Activated CD4-positive, alpha-beta memory T cell treated with anti-CD3 and anti-CD28 coated beads, Interleukin-2, amount 10 ng/mL, durations not matched to agents 7 days and 5 days (primary cell): ENCODE measurements at regions of chr14 and their contacts with region 1.

Region 1: GRCh38 chr14:68795597-68796417 is 2.9 kb upstream of the ZFP36L1 start:
- DNase-seq: peak; percentile 84
- H3K4me3 Mint-ChIP-seq: peak overlapping the region; percentile 92
- H3K27ac Mint-ChIP-seq: peak overlapping the region; percentile 100
- H3K4me1 Mint-ChIP-seq: peaks cover 34% of the 10 kb centered on the region
- H3K27me3 Mint-ChIP-seq: no peaks in the 10 kb centered on the region

Region 2: GRCh38 chr14:68248481-68249255 is 547.1 kb before region 1 on chr14:
- CTCF ChIA-PET with region 1: interaction called, 129 read pairs
- POLR2A ChIA-PET with region 1: interaction called, 60 read pairs
- DNase-seq: no peak
- H3K4me3 Mint-ChIP-seq: no peak overlapping the region
- H3K27ac Mint-ChIP-seq: no peak overlapping the region
- H3K4me1 Mint-ChIP-seq: peaks cover 15% of the 10 kb centered on the region
- H3K27me3 Mint-ChIP-seq: no peaks in the 10 kb centered on the region

Region 3: DNA sequence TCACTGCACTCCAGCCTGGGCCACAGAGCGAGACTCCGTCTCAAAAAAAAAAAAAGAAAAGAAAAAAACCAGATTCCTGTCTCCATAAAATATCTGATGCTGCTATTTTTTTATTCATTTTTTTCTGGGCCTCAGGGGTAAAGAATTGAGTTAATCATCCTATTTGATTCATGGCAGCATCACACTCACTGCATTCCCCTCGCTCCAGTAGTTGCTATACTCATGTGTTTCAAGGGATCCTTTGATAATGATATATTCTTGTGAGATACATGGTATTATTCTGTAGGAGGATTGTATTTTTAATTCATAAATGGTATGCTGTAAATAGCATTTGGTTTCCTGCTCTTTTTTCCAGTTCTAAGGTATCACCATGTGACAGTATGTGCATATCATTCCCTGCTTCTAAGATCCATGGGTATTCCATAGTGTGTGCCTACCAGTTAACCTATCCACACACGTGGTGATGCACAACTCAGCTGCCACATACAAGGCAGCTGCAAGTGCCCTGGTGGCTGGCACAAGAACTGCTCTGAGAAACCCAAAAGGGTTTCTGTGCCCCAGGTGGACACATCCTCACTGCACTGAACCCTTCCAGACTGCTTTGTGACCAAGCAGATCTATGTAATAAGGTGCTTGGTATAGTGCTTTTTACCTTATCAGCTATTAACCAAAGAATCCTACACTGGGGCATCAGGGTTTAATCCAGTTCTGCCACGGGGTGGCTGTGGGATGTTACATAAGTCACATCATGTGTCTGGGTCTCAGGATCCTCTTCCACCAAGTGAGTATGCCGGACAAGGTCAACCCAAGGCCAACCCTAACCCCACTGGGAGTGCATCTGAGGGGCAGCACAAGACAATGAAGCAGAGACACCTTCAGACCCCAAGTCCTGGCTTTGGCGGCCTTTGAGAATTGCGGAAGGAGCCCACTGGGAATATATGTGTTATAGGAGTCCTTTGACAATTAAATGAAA is 77.5 kb before region 1 on chr14:
- CTCF ChIA-PET with region 1: interaction called, 3 read pairs
- POLR2A ChIA-PET with region 1: interaction called, 10 read pairs
- DNase-seq: peak; percentile 31
- H3K4me3 Mint-ChIP-seq: no peak overlapping the region
- H3K27ac Mint-ChIP-seq: no peak overlapping the region
- H3K4me1 Mint-ChIP-seq: peaks cover 38% of the 10 kb centered on the region
- H3K27me3 Mint-ChIP-seq: no peaks in the 10 kb centered on the region

Region 4: GRCh38 chr14:68780358-68781160 is 15.2 kb before region 1 on chr14:
- CTCF ChIA-PET with region 1: interaction called, 43 read pairs
- POLR2A ChIA-PET with region 1: interaction called, 313 read pairs
- DNase-seq: peak; percentile 70
- H3K4me3 Mint-ChIP-seq: peak overlapping the region; percentile 74
- H3K27ac Mint-ChIP-seq: peak overlapping the region; percentile 99
- H3K4me1 Mint-ChIP-seq: peaks cover 74% of the 10 kb centered on the region
- H3K27me3 Mint-ChIP-seq: no peaks in the 10 kb centered on the region

Region 5: DNA sequence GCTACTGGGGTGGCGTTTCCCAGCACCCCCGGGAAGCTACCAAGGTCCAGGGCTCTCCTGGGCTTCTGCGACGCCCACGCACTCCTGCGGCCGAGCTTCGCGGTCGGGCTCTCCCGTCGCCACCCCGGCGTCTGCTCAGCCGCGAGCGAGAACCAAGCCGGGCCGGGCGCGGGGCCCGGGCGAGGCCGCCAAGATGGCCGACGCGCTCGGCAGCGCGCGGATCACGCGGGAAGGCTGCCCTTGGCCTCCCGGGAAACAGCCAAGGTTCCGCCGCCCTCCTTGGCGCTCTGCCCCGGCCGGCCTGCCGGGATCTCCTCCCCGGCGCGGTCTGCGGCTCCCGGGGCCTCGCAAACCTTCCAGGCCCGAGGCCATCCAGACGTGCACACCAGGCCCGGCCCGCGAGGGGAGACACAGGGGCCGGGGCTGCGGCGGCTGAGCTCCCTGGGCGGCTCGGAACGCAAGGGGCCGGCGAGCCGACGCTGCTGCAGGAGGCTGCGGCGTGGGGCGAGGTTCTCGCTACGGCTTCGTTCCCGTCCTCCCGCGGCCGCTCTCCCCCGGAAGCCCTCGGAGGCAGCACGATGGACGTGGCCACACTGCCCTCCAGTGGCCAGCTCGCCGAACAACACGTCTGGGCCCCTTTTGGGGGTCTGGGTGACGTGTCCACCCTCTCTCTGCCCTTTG is 20.6 kb after region 1 on chr14:
- CTCF ChIA-PET with region 1: interaction called, 178 read pairs
- POLR2A ChIA-PET with region 1: interaction called, 496 read pairs
- DNase-seq: peak; percentile 90
- H3K4me3 Mint-ChIP-seq: peak overlapping the region; percentile 72
- H3K27ac Mint-ChIP-seq: peak overlapping the region; percentile 84
- H3K4me1 Mint-ChIP-seq: peaks cover 53% of the 10 kb centered on the region
- H3K27me3 Mint-ChIP-seq: no peaks in the 10 kb centered on the region